ENCODE measurements at regions of chr1 and their contacts with region 1.

Region 1: DNA sequence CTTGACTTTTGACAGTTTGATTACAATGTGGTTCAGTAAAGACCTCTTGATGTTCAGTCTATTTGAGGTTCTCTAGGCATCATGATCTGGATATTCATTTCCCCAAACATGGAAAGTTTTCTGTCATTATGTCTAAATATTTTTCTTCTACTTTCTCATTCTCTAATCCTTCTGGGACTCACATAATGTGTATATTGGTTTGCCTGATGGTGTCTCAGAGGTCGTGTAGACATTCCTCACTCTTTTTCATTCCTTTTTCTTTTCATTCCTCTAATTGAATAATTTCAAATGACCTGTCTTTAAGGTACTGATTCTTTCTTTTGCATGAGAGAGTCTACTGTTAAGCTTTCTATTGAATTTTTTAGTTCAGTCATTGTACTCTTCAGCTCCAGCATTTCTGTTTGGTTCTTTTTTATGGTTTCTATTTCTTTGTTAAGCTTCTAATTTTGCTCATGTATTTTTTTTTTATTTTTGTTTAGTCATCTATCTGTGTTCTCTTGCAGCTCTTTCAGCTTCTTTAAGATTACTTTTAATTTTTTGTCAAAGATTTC is 158.4 kb downstream of the GDAP2 start:
- DNase-seq: no peak
- H3K4me3 ChIP-seq: no peak overlapping the region
- H3K4me3 Mint-ChIP-seq: no peak overlapping the region
- H3K27ac ChIP-seq: no peak overlapping the region
- H3K27ac Mint-ChIP-seq: no peak overlapping the region
- H3K4me1 ChIP-seq: no peaks in the 10 kb centered on the region
- H3K4me1 Mint-ChIP-seq: no peaks in the 10 kb centered on the region
- H3K27me3 ChIP-seq: no peaks in the 10 kb centered on the region
- H3K27me3 Mint-ChIP-seq: peaks cover 21 to 29% of the 10 kb centered on the region in 2 donors

Region 2: DNA sequence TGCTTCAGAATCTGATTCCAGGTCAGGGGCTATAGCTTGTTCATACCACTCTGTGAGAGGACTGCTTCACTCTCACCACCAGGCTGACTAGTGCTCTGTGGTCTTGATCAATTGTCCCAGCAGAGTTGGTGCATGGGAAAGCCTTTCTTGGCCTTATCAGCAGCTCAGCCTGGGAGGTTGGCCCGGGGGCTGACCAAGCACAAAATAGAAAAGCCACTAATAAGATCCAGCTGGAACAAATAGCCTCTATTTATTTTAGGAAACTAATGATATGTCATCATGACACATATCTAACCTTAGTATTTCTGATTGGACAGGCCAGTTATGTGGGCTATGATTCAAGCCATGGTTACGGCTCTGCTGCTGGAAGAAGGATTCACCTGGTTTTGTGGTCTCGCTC is 24.1 kb after region 1 on chr1:
- CTCF ChIA-PET with region 1: no interaction called
- POLR2A ChIA-PET with region 1: no interaction called
- intact Hi-C with region 1: no loop called
- DNase-seq: no peak
- H3K4me3 ChIP-seq: no peak overlapping the region
- H3K4me3 Mint-ChIP-seq: no peak overlapping the region
- H3K27ac ChIP-seq: no peak overlapping the region
- H3K27ac Mint-ChIP-seq: no peak overlapping the region
- H3K4me1 ChIP-seq: no peaks in the 10 kb centered on the region
- H3K4me1 Mint-ChIP-seq: no peaks in the 10 kb centered on the region
- H3K27me3 ChIP-seq: no peaks in the 10 kb centered on the region
- H3K27me3 Mint-ChIP-seq: peaks cover 13 to 23% of the 10 kb centered on the region in 2 donors

Region 3: DNA sequence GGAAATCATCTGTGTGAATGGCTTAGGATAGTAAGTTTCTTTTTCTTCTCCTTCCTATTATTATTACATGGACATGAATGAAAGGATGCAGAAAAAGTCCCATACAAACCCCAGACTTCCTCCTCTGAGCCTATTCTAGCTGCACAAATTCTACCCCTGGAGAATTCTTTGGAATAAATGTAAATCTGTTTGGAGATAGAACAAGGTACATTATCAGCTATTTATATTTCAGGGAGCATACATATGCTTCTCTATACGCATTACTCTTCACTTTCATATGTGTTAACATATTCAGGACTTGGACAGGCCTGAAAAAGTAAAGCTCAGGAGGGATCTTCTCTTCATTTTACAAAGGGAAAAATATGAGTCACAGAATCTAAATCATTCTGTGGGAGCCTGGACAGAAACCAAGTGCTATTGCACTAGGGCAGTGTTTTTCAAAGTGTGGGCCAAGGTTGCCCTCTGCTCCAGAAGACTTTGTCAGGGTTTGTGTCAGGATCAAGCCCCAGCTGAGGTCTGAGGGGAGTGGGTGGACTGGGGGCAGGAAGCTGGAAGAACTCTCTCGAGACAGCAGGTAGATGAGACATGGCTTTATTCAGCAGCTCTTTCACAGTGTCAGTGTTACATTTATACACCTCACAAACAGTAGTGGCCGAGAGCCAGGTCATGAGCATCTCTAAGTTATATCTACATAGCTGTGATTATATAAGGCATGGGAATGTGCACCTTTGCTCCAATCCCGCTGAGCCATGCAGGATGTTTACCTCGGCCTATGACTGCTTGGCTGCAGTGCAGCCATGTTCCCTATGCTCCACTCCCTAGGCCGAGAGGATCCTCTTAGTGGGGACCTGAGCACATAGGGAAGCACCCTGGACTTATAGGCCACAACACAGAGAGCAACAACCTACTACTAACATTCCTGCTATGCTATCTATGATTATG is 44.1 kb after region 1 on chr1:
- CTCF ChIA-PET with region 1: no interaction called
- POLR2A ChIA-PET with region 1: no interaction called
- intact Hi-C with region 1: loop called (anchors 1 kb)
- DNase-seq: no peak
- H3K4me3 ChIP-seq: no peak overlapping the region
- H3K4me3 Mint-ChIP-seq: no peak overlapping the region
- H3K27ac ChIP-seq: no peak overlapping the region
- H3K27ac Mint-ChIP-seq: no peak overlapping the region
- H3K4me1 ChIP-seq: no peaks in the 10 kb centered on the region
- H3K4me1 Mint-ChIP-seq: peaks cover 0 to 1% (median 0%) of the 10 kb centered on the region in 4 donors
- H3K27me3 ChIP-seq: no peaks in the 10 kb centered on the region
- H3K27me3 Mint-ChIP-seq: peaks cover 0 to 2% of the 10 kb centered on the region in 2 donors